OCI-LY7 (cell line): ENCODE measurements at regions of chr3 and their contacts with region 1.

Region 1: DNA sequence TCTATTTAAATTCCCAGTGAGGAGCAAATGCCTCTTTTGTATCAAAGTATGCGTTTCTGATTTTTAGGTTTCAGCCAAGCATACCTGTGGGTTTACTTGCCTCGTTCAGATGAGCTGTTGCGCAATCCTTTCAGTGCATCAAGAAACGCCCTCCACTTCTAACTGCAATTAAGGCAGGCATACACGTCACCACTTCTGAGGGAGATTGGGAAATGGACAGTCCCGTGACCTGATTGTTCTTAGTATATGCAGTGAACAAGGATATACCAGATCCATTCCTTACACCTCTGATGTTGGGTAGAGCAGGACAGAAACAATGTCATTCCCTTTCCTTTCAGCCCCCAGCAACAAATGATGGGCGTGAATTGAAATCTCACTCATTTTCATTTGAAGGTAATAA is 219.0 kb downstream of the ITPR1 start:
- DNase-seq: no peak
- H3K4me3 ChIP-seq: no peak overlapping the region
- H3K27ac ChIP-seq: no peak overlapping the region
- H3K4me1 ChIP-seq: no peaks in the 10 kb centered on the region
- CTCF ChIP-seq: no peak

Region 2: GRCh38 chr3:4350789-4351163 is 361.4 kb before region 1 on chr3:
- CTCF ChIA-PET with region 1: no interaction called
- POLR2A ChIA-PET with region 1: no interaction called
- intact Hi-C with region 1: no loop called
- DNase-seq: peak; percentile 72
- H3K4me3 ChIP-seq: no peak overlapping the region
- H3K27ac ChIP-seq: no peak overlapping the region
- H3K4me1 ChIP-seq: no peaks in the 10 kb centered on the region
- CTCF ChIP-seq: peak; percentile 97

Region 3: GRCh38 chr3:4373669-4374068 is 338.5 kb before region 1 on chr3:
- CTCF ChIA-PET with region 1: no interaction called
- POLR2A ChIA-PET with region 1: no interaction called
- intact Hi-C with region 1: no loop called
- DNase-seq: no peak
- H3K4me3 ChIP-seq: no peak overlapping the region
- H3K27ac ChIP-seq: no peak overlapping the region
- H3K4me1 ChIP-seq: no peaks in the 10 kb centered on the region
- CTCF ChIP-seq: no peak

Region 4: DNA sequence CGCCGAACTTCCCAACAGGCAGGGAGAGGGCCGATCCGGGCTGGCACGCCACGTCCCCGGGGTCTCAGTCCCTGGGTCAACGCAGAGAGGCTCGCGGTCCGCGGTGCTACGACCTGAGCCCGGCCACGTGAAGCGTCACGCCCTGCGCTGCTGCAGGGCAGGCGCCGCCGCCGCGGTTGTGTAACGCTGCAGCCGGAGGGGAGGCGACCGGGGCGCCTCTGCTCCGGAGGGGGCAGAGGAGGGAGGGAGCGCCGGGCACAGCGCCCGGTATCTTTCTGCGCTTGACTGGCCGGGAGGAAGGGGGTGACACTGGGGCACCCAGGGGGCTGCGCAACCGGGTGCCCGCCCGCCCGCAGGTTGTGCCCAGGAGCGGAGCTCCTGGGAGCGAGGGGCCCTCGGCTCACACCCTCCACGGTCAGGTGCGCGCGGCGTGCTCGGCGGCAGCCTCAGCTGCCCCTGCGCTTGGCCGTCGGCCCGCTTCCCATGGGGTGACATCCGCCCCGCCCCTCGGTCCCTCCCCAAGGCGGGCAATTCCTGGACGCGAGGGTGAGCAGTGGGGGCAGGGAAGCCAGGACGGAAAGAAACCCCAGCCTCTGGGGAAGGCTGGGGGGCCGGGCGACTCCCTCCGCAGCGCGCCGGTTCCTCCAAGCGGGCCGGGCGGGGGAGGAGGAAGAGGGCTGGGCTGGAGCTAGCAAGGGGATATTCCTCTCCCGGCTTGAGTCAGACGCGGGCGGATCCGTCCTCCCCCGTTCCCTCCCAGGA is 266.2 kb after region 1 on chr3:
- CTCF ChIA-PET with region 1: no interaction called
- POLR2A ChIA-PET with region 1: interaction called, 4 read pairs
- intact Hi-C with region 1: loop called (anchors 5 kb)
- DNase-seq: peak; percentile 23
- H3K4me3 ChIP-seq: peak overlapping the region; percentile 65
- H3K27ac ChIP-seq: no peak overlapping the region
- H3K4me1 ChIP-seq: peaks cover 26% of the 10 kb centered on the region
- CTCF ChIP-seq: 0 out of 2 replicates have a peak, but pooled peaks have one; percentile 11